ENCODE measurements at regions of chr4 and their contacts with region 1.

Region 1: GRCh38 chr4:39044364-39044955 is 12.3 kb upstream of the TMEM156 start:
- DNase-seq: peak; percentile 94
- H3K4me3 ChIP-seq: peak overlapping the region; percentile 60 to 98 (median 95)
- H3K27ac ChIP-seq: peak overlapping the region; percentile 92
- H3K4me1 ChIP-seq: peaks cover 25% of the 10 kb centered on the region
- H3K27me3 ChIP-seq: no peaks in the 10 kb centered on the region
- CTCF ChIP-seq: no peak
- POLR2A ChIP-seq: peak; percentile 81

Region 2: GRCh38 chr4:38509551-38509950 is 534.9 kb before region 1 on chr4:
- CTCF ChIA-PET with region 1: no interaction called
- POLR2A ChIA-PET with region 1: no interaction called
- dilution Hi-C with region 1: no loop called
- intact Hi-C with region 1: no loop called
- DNase-seq: no peak
- H3K4me3 ChIP-seq: no peak overlapping the region
- H3K27ac ChIP-seq: no peak overlapping the region
- H3K4me1 ChIP-seq: no peaks in the 10 kb centered on the region
- H3K27me3 ChIP-seq: peaks cover 10 to 14% of the 10 kb centered on the region in 2 experiments
- CTCF ChIP-seq: no peak
- POLR2A ChIP-seq: no peak

Region 3: DNA sequence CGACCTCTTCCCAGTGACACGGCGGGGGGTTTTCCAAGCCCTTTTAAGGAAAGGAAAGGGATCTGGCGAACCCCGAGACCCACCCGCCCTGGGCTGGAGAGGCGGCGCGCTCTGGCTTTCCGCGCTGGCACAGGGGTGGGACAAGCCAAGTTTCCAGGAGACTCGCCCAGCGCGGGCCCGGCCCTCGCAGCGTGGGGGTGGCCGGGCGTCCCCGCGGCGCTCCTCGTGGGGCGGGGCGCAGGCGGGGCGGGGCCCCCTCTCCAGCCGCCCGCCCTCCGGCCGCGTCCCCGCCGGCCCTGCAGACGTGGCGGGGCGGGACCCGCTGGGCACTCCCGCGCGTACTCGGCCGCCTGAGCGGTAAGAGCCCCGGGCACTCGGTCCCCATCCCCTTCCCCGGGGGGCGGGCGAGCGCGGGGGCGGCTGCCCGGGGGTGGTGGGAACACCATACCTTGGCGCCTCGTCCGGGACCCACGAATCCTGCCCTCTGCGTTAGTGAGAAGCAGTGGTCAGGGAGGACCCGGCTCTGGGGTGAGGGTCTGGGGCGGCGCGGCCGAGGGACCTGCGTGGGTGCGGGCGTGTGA is 176.9 kb before region 1 on chr4 and contains the start of gene FAM114A1:
- CTCF ChIA-PET with region 1: no interaction called
- POLR2A ChIA-PET with region 1: no interaction called
- dilution Hi-C with region 1: no loop called
- intact Hi-C with region 1: loop called (anchors 5 kb)
- DNase-seq: peak; percentile 80
- H3K4me3 ChIP-seq: peak within 1 kb of the TSS; percentile 19 to 90 (median 57)
- H3K27ac ChIP-seq: peak within 1 kb of the TSS; percentile 89
- H3K4me1 ChIP-seq: peaks cover 23% of the 10 kb centered on the region
- H3K27me3 ChIP-seq: peaks cover 0 to 2% of the 10 kb centered on the region in 2 experiments
- CTCF ChIP-seq: no peak
- POLR2A ChIP-seq: peak; percentile 32
- total RNA-seq, gene FAM114A1: 99.2 and 101 TPM in 2 replicates

Region 4: GRCh38 chr4:38948551-38948950 is 95.9 kb before region 1 on chr4:
- CTCF ChIA-PET with region 1: interaction called, 4 read pairs
- POLR2A ChIA-PET with region 1: no interaction called
- dilution Hi-C with region 1: no loop called
- intact Hi-C with region 1: loop called (anchors 5 kb)
- DNase-seq: no peak
- H3K4me3 ChIP-seq: no peak overlapping the region
- H3K27ac ChIP-seq: no peak overlapping the region
- H3K4me1 ChIP-seq: peaks cover 6% of the 10 kb centered on the region
- H3K27me3 ChIP-seq: peaks cover 0 to 3% of the 10 kb centered on the region in 2 experiments
- CTCF ChIP-seq: no peak
- POLR2A ChIP-seq: no peak

Region 5: GRCh38 chr4:38967260-38968095 is 77.0 kb before region 1 on chr4:
- CTCF ChIA-PET with region 1: no interaction called
- POLR2A ChIA-PET with region 1: no interaction called
- dilution Hi-C with region 1: no loop called
- intact Hi-C with region 1: no loop called
- DNase-seq: peak; percentile 9
- H3K4me3 ChIP-seq: no peak overlapping the region
- H3K27ac ChIP-seq: no peak overlapping the region
- H3K4me1 ChIP-seq: no peaks in the 10 kb centered on the region
- H3K27me3 ChIP-seq: no peaks in the 10 kb centered on the region
- CTCF ChIP-seq: no peak
- POLR2A ChIP-seq: no peak

Region 6: GRCh38 chr4:39032218-39033085 is 12.0 kb before region 1 on chr4 and contains the start of gene TMEM156:
- CTCF ChIA-PET with region 1: interaction called, 20 read pairs
- POLR2A ChIA-PET with region 1: interaction called, 4 read pairs
- dilution Hi-C with region 1: no loop called
- intact Hi-C with region 1: loop called (anchors 1 kb)
- DNase-seq: peak; percentile 75
- H3K4me3 ChIP-seq: peak within 1 kb of the TSS in 1 of 3 experiments; percentile 19
- H3K27ac ChIP-seq: peak within 1 kb of the TSS; percentile 90
- H3K4me1 ChIP-seq: peaks cover 27% of the 10 kb centered on the region
- H3K27me3 ChIP-seq: no peaks in the 10 kb centered on the region
- CTCF ChIP-seq: no peak
- POLR2A ChIP-seq: no peak
- total RNA-seq, gene TMEM156: 1.00 and 2.7 TPM in 2 replicates

Region 7: GRCh38 chr4:39181905-39182638 is 137.6 kb after region 1 on chr4 and contains the start of gene WDR19:
- CTCF ChIA-PET with region 1: no interaction called
- POLR2A ChIA-PET with region 1: no interaction called
- dilution Hi-C with region 1: no loop called
- intact Hi-C with region 1: loop called (anchors 1 kb)
- DNase-seq: peak; percentile 100
- H3K4me3 ChIP-seq: peak within 1 kb of the TSS; percentile 51 to 85 (median 78)
- H3K27ac ChIP-seq: no peak within 1 kb of the TSS
- H3K4me1 ChIP-seq: peaks cover 9% of the 10 kb centered on the region
- H3K27me3 ChIP-seq: no peaks in the 10 kb centered on the region
- CTCF ChIP-seq: peak; percentile 35 to 59
- POLR2A ChIP-seq: peak; percentile 51
- total RNA-seq, gene WDR19: 28.2 and 32.7 TPM in 2 replicates

Region 8: GRCh38 chr4:39308611-39309010 is 264.2 kb after region 1 on chr4:
- CTCF ChIA-PET with region 1: no interaction called
- POLR2A ChIA-PET with region 1: no interaction called
- dilution Hi-C with region 1: no loop called
- intact Hi-C with region 1: no loop called
- DNase-seq: peak; percentile 72
- H3K4me3 ChIP-seq: no peak overlapping the region
- H3K27ac ChIP-seq: peak overlapping the region; percentile 21
- H3K4me1 ChIP-seq: peaks cover 4% of the 10 kb centered on the region
- H3K27me3 ChIP-seq: no peaks in the 10 kb centered on the region
- CTCF ChIP-seq: no peak
- POLR2A ChIP-seq: no peak

Measured in endothelial cell of umbilical vein (primary cell).